ENCODE measurements at regions of chr10 and their contacts with region 1.

Region 1: DNA sequence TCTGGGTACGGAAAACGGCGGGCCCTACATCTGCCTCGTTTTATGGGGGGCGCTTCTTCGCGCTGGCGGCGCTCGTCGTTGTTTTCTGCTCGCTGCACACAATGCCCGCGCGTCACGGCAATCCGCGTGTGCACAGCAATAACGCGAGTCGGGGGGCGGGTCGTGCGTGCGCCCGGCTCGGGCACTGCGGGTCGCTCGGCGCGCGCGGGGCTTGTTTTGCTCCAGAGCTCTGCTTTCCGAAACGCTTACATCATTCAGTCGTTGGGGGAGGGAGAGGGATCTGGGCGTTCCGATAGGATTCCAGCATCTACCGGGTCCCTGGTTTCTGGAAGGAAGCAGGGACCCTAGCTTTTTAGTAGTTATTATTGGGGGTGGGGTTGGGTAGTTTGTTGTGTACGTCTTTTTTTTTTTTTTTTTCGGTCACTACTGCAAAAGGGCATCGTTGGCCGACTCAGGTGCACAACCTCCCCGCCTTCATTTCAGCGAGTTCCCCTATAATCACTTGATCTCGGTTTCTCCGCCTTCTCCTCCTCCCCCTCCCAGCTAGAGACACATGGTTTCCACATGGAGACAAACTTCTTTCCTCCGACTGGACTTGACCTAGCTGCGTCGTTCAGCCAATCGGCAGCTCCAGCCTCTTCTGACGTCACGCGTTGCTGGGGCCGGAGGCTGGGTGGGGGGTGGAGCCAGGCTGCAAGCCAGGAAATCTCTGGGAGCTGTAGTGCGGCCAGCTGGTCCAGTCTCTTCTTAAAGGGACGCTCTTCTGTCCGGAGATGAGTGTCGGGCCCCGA is 3.5 kb downstream of the MXI1 start:
- DNase-seq: peak; percentile 96 to 99
- H3K4me3 ChIP-seq: peak overlapping the region; percentile 78 to 87
- H3K27ac ChIP-seq: peak overlapping the region; percentile 96 to 99
- H3K4me1 ChIP-seq: peaks cover 0 to 50% (median 41%) of the 10 kb centered on the region in 4 donors
- H3K27me3 ChIP-seq: no peaks in the 10 kb centered on the region
- CTCF ChIP-seq: no peak

Region 2: GRCh38 chr10:109895095-109895818 is 315.6 kb before region 1 on chr10:
- intact Hi-C with region 1: loop called (anchors 5 kb)
- DNase-seq: peak; percentile 85 to 92
- H3K4me3 ChIP-seq: no peak overlapping the region
- H3K27ac ChIP-seq: peak overlapping the region; percentile 84 to 85
- H3K4me1 ChIP-seq: peaks cover 0 to 100% (median 82%) of the 10 kb centered on the region in 4 donors
- H3K27me3 ChIP-seq: no peaks in the 10 kb centered on the region
- CTCF ChIP-seq: no peak

Region 3: DNA sequence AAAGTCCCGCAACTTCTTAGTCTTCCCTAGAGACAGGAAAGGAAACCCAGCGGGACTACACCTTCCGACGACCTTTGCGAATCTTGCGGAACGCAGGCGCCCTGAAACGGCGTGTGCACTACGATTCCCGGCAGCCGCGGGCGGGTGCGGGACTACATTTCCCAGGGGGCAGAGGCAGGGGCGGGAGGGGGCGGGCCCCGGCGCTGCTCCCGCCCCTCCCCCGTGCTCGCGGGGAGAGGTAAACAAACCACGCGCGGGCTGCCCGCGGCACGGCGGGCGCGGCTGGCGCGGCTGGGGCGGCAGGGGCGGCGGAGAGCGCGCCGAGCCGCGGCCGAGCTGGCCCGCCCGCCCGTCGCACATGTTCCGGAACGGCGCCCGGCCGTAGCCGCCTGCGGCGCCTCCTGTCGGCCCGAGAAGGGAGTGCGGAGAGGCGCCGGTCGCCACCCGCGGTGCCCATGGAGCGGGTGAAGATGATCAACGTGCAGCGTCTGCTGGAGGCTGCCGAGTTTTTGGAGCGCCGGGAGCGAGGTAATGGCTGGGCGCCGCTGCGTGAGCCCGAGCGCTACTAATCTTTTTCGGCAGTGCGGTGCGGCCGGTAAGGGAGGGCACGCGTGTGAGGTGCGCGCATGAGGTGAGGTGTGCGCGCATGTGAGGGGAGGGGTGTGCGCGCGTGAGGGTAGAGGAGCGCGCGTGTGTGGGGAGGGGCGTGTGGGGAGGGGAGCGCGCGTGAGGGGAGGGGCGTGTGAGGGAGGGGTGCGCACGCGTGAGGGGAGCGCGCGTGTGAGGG is 15.1 kb after region 1 on chr10:
- intact Hi-C with region 1: loop called (anchors 1 kb)
- DNase-seq: peak; percentile 89 to 96
- H3K4me3 ChIP-seq: peak overlapping the region; percentile 92 to 95
- H3K27ac ChIP-seq: peak overlapping the region; percentile 89 to 93
- H3K4me1 ChIP-seq: peaks cover 0 to 59% (median 42%) of the 10 kb centered on the region in 4 donors
- H3K27me3 ChIP-seq: no peaks in the 10 kb centered on the region
- CTCF ChIP-seq: peak; percentile 66 to 91

Region 4: GRCh38 chr10:110279407-110279986 is 68.6 kb after region 1 on chr10:
- intact Hi-C with region 1: loop called (anchors 5 kb)
- DNase-seq: peak in 1 of 2 donors; percentile 56
- H3K4me3 ChIP-seq: no peak overlapping the region
- H3K27ac ChIP-seq: peak overlapping the region; percentile 42 to 48
- H3K4me1 ChIP-seq: peaks cover 0 to 64% (median 35%) of the 10 kb centered on the region in 4 donors
- H3K27me3 ChIP-seq: no peaks in the 10 kb centered on the region
- CTCF ChIP-seq: peak; percentile 67 to 86

Region 5: DNA sequence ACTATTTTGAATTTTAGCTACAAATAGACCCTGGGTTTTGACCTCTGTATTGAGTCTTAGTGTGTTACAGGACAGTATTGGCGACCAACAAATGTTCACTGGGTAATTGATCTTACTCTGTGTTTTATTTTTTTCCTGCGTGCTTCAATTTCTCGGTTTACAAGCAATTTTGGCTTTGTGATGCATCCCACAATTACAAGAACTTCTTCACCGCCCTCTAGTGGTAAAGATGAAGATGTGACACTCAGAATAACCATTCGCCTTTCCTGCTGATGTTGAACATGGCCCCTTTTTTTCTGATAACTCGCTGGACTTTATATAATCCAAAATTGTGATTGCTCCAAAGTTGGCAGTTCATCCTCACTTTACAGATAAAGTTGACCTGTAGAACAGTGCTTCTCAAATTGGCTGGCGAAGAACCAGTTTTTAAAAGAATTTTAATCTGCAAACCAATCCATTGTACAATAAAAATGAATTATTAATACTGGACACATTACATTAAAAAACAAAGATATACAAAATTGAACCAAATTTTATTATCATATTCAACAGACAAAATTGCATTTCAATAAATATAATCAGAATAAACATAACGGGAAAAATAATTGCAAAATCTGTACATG is 336.4 kb after region 1 on chr10:
- intact Hi-C with region 1: loop called (anchors 10 kb)
- DNase-seq: no peak
- H3K4me3 ChIP-seq: no peak overlapping the region
- H3K27ac ChIP-seq: no peak overlapping the region
- H3K4me1 ChIP-seq: no peaks in the 10 kb centered on the region
- H3K27me3 ChIP-seq: peaks cover 0 to 18% of the 10 kb centered on the region in 2 donors
- CTCF ChIP-seq: peak; percentile 70 to 84

Measured in tibial artery (tissue), 4 donors.